ENCODE measurements at regions of chr10 and their contacts with region 1.

Region 1: GRCh38 chr10:11782793-11783557 is 40.2 kb upstream of the PROSER2 start:
- DNase-seq: peak; percentile 61
- H3K4me3 ChIP-seq: no peak overlapping the region
- H3K27ac ChIP-seq: no peak overlapping the region
- H3K4me1 ChIP-seq: no peaks in the 10 kb centered on the region
- H3K27me3 ChIP-seq: no peaks in the 10 kb centered on the region
- CTCF ChIP-seq: peak; percentile 78
- EP300 ChIP-seq: no peak
- RAD21 ChIP-seq: peak; percentile 73

Region 2: DNA sequence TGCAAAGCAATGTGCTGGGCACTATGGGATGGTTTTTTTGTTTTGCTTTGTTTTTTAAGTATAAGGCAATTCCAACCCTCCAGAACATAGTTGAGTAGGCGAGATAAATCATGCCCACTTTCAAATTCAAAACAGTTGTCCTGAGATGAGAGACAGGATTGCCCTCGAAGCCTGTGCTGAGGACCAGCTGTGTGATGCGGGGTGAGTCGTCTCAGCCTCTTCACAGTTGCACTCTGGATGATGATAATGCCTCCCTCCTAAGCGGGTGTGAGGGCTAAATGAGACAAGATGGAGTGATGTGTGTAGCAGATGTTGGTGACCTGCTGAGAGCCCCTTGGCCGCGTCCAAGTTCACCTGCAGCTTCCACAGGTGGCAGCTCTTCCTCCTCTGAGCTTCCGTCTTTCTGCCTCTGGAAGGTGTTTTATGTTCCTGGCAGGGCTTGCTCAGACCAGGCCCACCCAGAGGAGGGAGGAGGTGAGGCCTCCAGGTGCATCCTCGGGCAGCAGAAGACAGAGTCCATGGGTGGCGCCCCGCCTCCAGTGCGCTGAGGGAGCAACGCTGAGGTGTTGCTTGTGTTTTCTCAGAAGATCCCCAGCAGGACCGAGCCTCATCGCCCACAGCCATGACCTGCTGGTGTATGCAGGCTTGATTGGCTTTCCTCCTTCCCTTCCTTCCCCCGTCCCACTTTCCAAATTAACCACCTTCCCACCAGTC is 10.2 kb before region 1 on chr10:
- CTCF ChIA-PET with region 1: interaction called, 17 read pairs
- POLR2A ChIA-PET with region 1: no interaction called
- DNase-seq: no peak
- H3K4me3 ChIP-seq: no peak overlapping the region
- H3K27ac ChIP-seq: no peak overlapping the region
- H3K4me1 ChIP-seq: no peaks in the 10 kb centered on the region
- H3K27me3 ChIP-seq: no peaks in the 10 kb centered on the region
- CTCF ChIP-seq: no peak
- EP300 ChIP-seq: no peak
- RAD21 ChIP-seq: no peak

Region 3: DNA sequence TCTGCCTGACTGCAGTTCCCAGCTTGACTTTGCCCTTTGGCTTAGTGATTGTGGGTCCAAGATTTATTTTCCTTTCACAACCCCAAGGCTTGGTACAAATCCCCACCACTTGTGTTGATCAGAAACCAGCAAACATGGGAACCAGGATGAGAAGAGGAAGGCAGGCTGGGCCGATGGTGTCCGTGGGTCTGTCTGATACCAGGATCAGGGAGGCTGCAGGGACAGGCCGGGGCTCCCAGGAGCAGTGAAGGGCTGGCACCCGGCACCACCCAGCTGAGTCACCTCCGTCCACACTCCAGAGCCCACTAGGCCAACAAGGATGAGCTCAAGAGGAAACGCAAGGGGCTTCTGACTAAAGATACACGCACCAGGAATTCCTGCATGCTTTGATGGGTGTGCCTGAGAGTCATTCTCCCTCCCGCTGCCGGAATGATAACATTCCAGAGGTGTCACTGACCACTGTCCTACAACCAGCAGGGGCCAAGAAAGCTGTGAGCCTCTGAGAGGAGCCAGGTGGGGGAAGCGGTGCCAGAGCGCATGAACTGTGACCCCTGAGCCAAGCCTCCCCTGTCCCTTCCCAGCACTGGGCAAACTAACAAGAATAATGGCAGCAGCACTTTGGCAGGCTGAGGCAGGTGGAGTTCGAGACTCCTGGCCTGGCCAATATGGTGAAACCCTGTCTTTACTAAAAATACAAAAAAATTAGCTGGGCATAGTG is 10.9 kb after region 1 on chr10:
- CTCF ChIA-PET with region 1: interaction called, 48 read pairs
- POLR2A ChIA-PET with region 1: no interaction called
- DNase-seq: no peak
- H3K4me3 ChIP-seq: no peak overlapping the region
- H3K27ac ChIP-seq: peak overlapping the region in 1 of 2 experiments; percentile 33; a peak in 1 of 4 replicates
- H3K4me1 ChIP-seq: peaks cover 0 to 8% of the 10 kb centered on the region in 2 experiments; a peak in 1 of 4 replicates
- H3K27me3 ChIP-seq: no peaks in the 10 kb centered on the region
- CTCF ChIP-seq: no peak
- EP300 ChIP-seq: no peak
- RAD21 ChIP-seq: no peak

Region 4: GRCh38 chr10:11798845-11799735 is 16.1 kb after region 1 on chr10:
- CTCF ChIA-PET with region 1: interaction called, 48 read pairs
- POLR2A ChIA-PET with region 1: no interaction called
- DNase-seq: peak; percentile 63
- H3K4me3 ChIP-seq: no peak overlapping the region
- H3K27ac ChIP-seq: no peak overlapping the region
- H3K4me1 ChIP-seq: peaks cover 4 to 8% of the 10 kb centered on the region in 2 experiments; a peak in 2 of 4 replicates
- H3K27me3 ChIP-seq: no peaks in the 10 kb centered on the region
- CTCF ChIP-seq: no peak
- EP300 ChIP-seq: no peak
- RAD21 ChIP-seq: no peak

Region 5: DNA sequence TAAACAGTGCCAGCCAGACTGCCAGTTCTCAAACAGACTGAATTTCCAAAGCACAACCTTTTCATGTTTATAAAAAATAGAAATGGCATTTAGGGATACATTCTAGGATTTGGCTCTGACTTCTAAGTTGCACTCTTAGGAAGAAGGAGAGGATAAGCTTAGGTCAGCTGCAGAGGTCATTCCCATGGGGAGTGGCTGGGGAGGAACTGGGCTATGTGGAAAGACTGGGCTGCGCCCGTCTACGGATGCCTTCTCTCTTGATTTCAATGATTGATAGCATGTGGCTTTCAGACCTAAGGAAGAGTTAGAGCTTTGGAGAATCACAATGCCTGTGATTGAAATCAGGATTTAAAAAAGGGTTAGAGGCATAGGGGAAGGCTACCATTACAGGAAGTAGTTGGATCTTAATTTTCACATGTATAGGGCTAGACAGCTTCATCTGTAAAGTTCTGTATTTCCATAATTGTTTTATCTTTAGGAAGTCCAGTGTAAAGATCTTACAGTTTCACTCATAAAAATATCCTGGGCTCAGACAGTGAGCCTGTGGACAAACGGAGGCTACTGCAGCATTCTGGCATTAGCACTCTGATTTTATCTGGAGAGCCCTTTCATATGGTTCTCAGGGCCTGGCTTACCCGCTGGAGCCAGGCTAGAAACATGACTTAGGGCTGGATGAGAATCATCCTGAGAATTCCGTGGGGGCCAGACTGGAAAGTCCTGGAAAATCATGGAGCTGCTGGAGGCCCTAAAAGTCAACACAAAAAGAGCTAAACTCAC is 383.2 kb after region 1 on chr10:
- CTCF ChIA-PET with region 1: no interaction called
- POLR2A ChIA-PET with region 1: no interaction called
- DNase-seq: peak; percentile 71
- H3K4me3 ChIP-seq: no peak overlapping the region
- H3K27ac ChIP-seq: peak overlapping the region in 1 of 2 experiments; percentile 81; a peak in 3 of 4 replicates
- H3K4me1 ChIP-seq: peaks cover 0 to 13% of the 10 kb centered on the region in 2 experiments; a peak in 2 of 4 replicates
- H3K27me3 ChIP-seq: no peaks in the 10 kb centered on the region
- CTCF ChIP-seq: no peak
- EP300 ChIP-seq: no peak
- RAD21 ChIP-seq: no peak